ENCODE measurements at regions of chr11 and their contacts with region 1.

Region 1: DNA sequence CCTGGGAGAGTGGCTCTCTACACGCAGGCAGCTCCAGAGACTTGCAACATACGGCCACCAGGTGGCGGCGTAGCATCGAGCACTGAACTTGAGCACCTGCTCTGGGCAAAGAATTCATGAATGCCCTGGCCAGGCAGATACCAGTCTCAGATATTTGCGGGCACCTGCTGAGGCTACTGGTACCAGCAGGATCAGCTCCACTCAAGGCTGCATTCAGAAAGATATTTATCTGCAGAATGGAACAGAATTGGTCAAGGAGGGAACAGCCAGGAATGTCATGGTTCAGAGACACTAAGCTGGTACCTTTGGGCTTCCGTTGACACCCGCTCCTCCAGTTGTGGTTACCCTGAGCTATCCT is 10.8 kb upstream of the CCDC86 start:
- DNase-seq: no peak
- H3K4me3 ChIP-seq: no peak overlapping the region
- CTCF ChIP-seq: peak; percentile 89

Region 2: GRCh38 chr11:60786811-60787567 is 44.1 kb before region 1 on chr11:
- CTCF ChIA-PET with region 1: interaction called, 10 read pairs
- POLR2A ChIA-PET with region 1: no interaction called
- DNase-seq: peak; percentile 42
- H3K4me3 ChIP-seq: no peak overlapping the region
- CTCF ChIP-seq: no peak

Region 3: GRCh38 chr11:60841797-60842667 is 10.9 kb after region 1 on chr11 and contains the start of gene CCDC86:
- CTCF ChIA-PET with region 1: interaction called, 30 read pairs
- POLR2A ChIA-PET with region 1: no interaction called
- DNase-seq: peak; percentile 44
- H3K4me3 ChIP-seq: peak within 1 kb of the TSS; percentile 93
- CTCF ChIP-seq: no peak

Region 4: GRCh38 chr11:60880643-60881282 is 49.6 kb after region 1 on chr11:
- CTCF ChIA-PET with region 1: interaction called, 1,087 read pairs
- POLR2A ChIA-PET with region 1: no interaction called
- DNase-seq: no peak
- H3K4me3 ChIP-seq: no peak overlapping the region
- CTCF ChIP-seq: no peak

Region 5: DNA sequence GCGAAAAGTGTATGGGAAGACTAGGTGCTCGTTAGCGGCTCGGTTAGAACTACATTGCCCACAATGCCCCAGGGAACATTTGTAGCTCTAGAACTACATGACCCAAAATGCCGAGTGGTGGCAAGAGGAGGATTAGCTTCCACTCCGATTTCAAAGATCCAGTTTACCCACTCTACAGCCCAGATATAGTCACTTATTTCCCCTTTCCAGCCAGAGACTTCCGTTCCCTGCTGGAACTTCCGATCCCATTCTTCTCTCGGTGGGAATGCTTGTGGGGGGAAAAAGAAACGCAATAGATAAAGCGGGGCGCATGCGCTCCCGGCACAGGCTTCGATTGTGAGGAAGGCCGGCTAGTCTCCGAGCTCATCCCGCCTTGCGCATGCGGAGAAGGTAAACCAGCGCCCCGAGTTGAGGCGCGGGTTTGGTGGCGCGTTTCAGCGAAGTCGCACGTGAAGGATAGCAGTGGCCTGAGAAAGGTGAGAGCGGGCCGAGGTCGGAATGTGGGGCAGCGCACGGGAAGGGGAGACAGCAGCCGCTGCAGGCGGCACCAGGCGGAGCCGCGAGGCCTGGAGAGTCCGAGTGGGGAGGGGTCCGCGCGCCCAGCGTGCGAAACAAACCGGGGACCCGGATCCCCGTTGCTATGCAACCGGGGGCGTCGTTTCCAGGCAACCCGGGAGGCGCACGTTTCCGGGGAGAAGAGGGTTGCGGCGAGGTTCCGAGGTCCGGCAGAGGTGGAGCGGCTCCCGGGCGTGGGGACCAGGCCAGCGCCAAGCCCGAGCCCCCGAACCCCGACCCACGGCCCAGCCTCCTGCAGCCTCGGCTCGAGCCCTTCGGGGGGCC is 82.9 kb after region 1 on chr11 and contains the start of gene TMEM109:
- CTCF ChIA-PET with region 1: interaction called, 1,087 read pairs
- POLR2A ChIA-PET with region 1: no interaction called
- DNase-seq: peak; percentile 51
- H3K4me3 ChIP-seq: peak within 1 kb of the TSS; percentile 86
- CTCF ChIP-seq: no peak

Region 6: DNA sequence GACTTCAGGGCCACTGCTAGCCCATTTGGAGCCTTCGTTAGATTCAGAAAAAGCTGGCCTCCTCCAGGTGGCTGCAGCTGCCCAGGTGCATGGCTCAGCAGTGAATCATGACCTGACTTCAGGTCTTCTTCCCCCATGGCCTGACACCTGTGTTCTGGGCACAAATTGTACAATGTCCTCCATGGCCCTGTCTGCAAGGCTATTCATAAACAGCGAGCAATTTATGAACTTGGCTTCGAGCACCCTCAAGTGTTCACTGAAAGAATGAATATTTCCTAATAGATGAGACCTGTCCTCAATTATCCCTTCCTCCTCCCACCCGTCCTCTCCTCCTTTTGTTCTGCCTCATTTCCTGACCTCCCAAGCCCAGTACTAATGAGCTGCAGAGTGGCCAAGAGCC is 342.3 kb after region 1 on chr11:
- CTCF ChIA-PET with region 1: interaction called, 12 read pairs
- POLR2A ChIA-PET with region 1: no interaction called
- DNase-seq: no peak
- H3K4me3 ChIP-seq: no peak overlapping the region
- CTCF ChIP-seq: no peak